Pancreas (tissue), 10 donors: ENCODE measurements at regions of chr22 and their contacts with region 1.

Region 1: GRCh38 chr22:30253205-30253852 is 6.8 kb upstream of the LIF start:
- DNase-seq: peak in 5 of 6 donors; percentile 44 to 66 (median 60)
- ATAC-seq: peak; percentile 8 to 43 (median 14)
- H3K4me3 ChIP-seq: no peak overlapping the region
- H3K27ac ChIP-seq: peak overlapping the region in 2 of 4 donors; percentile 39 to 63
- H3K4me1 ChIP-seq: peaks cover 0 to 4% (median 0%) of the 10 kb centered on the region in 3 donors
- H3K27me3 ChIP-seq: no peaks in the 10 kb centered on the region
- CTCF ChIP-seq: no peak

Region 2: DNA sequence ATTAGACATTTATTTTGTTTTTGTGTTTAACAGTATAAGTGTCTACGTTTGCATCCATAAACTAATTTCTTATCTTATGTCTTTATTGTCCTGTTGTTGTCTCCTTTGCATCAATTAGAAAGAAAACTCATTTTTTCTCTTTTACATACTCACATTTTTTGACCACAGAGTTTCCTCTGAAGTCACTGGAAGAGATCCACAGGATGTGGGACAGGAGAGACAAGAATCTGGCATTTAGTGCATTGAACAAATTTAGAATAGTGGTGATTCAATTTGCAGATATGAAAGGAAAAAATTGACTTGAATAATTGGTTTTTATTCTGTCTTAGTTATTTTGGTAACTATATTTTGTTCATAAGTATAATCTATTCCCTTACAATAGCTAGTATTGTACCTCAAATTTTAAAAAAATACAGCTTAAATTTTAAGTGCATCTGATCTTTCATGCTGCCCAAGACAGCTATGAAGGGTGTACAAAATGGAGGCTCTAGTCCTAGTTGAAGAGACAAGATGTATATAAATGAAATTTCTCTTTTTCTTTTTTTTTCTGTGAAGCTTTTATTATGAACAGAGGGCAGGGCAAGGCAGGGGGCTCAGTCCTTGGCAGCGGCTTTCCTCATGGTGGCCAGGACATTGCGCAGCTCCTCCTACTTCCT is 148.7 kb before region 1 on chr22:
- intact Hi-C with region 1: loop called in 1 of 3 experiments (anchors 5 kb)
- DNase-seq: no peak
- ATAC-seq: no peak
- H3K4me3 ChIP-seq: no peak overlapping the region
- H3K27ac ChIP-seq: no peak overlapping the region
- H3K4me1 ChIP-seq: no peaks in the 10 kb centered on the region
- H3K27me3 ChIP-seq: no peaks in the 10 kb centered on the region
- CTCF ChIP-seq: no peak

Region 3: DNA sequence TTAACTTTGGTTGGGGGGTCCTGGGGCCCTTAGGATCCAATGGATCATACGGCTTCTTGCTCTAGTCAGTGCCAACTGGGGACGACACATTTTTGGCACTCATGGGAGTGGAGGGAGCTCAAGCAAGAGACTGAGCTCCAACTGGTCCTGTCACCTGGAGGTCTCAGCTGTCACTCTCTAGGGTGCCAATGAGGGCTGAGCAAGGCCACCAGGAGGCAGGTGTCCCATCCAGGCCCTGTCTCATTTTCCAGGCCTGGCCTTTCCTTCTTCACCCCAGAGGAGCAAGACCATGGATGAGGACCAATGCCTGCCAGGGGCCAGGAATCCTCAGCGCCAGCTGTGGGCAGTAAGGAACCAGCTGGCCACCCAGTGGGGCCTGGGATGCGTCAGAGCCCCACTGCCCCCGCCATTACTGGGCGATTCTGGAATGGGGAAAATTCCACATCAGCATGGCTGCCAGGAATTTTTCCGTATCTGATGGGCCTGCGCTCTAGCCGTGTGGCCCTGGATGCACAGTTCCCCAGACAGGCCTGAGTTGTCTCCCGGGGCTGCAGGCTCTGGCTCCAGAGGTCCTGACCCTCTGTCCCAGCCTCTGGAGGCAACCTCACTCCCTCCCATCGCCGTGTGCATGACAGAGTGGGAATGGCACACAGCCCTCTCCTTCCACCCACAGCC is 321.8 kb after region 1 on chr22:
- intact Hi-C with region 1: no loop called
- DNase-seq: peak in 5 of 6 donors; percentile 58 to 74 (median 69)
- ATAC-seq: peak; percentile 57 to 68 (median 62)
- H3K4me3 ChIP-seq: peak overlapping the region in 2 of 4 donors; percentile 48 to 56
- H3K27ac ChIP-seq: peak overlapping the region; percentile 38 to 86 (median 56)
- H3K4me1 ChIP-seq: peaks cover 5 to 24% (median 20%) of the 10 kb centered on the region in 3 donors
- H3K27me3 ChIP-seq: no peaks in the 10 kb centered on the region
- CTCF ChIP-seq: no peak